WTC11 (cell line): ENCODE measurements at regions of chr2 and their contacts with region 1.

Region 1: DNA sequence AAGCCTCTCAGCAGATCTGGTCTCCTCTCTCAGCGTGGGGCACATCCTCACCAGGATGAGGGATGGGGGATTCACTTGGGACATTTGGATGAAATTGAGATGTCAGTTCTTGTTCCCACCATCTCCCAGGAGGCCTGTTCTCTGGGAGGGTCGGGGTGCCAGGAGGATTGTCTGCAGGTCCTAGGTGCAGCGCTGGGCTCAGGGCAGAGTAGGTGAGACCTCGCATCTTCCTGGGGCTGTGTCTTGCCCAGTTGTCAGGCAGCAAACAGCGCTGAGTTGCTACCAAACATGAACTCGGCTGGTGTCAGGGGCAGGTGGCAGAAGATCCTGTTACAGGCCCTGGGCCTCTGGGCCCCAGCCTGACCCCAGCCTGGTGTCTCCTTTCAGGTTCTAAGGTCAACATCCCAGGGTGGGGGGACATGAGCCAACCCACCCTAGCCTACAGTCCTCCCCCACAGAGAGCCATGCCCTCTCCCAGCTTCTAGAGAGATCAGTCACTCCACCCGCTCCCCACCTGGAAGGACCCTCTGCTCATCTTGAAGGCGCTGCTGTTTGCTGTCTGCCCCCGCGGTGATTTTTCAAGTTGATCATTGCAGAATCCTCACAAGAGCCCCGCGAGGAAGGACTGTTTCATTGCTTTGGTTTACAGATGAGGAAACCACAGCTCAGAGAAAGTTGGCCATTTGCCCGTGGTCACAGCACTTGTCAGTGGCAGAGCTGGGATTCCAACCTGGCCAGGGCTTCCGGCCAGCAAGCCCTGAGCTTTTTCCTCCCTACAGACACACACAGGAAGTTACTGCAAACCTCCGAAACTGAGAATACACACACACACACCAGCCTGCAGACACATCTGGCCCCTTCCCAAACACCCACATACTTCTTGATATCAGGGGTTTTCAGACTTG is 83.9 kb downstream of the STPG4 start:
- DNase-seq: no peak
- ATAC-seq: no peak
- H3K4me3 Mint-ChIP-seq: no peak overlapping the region
- H3K27ac Mint-ChIP-seq: peak overlapping the region; percentile 88
- H3K4me1 Mint-ChIP-seq: peaks cover 42% of the 10 kb centered on the region
- H3K27me3 Mint-ChIP-seq: no peaks in the 10 kb centered on the region
- CTCF ChIP-seq: no peak

Region 2: DNA sequence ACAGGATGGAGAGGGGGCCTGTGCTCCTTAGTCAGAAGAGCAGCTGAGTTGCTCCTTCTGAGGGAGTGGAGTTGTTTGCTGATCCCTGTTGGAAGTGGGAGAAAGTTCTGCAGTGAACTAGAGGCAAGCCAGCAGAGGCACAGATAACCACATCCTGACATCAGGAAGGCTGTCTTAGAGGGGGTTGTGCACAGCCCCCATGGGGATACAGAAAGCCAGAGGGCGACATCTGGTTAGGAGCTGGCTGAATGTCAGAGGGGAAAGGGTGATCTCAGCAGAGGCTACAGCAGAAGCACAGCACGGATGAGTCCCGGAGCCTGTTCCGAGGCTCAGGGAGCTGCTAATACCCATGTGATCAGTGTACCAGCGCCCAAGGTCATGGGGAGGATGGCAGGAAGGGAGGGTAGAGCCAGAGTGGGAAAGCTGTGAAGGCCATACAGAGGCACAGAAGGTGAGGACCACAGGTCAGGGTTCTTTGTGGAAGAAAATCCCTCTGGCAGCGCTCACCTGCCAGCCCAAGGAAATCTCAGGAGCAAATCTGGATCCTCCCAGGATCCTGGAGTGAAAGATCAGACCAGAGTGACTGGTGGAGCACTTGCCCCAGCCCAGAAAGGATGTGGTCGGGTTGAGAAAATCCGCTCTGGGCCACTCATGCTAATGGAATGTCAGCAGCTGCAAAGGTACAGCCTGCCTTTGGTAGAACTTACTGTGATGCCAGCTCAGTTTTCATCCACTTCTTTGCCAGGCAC is 27.9 kb before region 1 on chr2:
- CTCF ChIA-PET with region 1: interaction called, 13 read pairs
- POLR2A ChIA-PET with region 1: no interaction called
- DNase-seq: peak; percentile 22
- ATAC-seq: peak; percentile 61
- H3K4me3 Mint-ChIP-seq: no peak overlapping the region
- H3K27ac Mint-ChIP-seq: peak overlapping the region; percentile 69
- H3K4me1 Mint-ChIP-seq: peaks cover 32% of the 10 kb centered on the region
- H3K27me3 Mint-ChIP-seq: no peaks in the 10 kb centered on the region
- CTCF ChIP-seq: no peak